MCF 10A (cell line): ENCODE measurements at regions of chr3 and their contacts with region 1.

Region 1: GRCh38 chr3:66038726-66039589 is at the start of gene MAGI1:
- DNase-seq: peak; percentile 91
- H3K4me3 Mint-ChIP-seq: peak within 1 kb of the TSS; percentile 91
- H3K27ac Mint-ChIP-seq: peak within 1 kb of the TSS; percentile 89
- H3K4me1 Mint-ChIP-seq: peaks cover 23% of the 10 kb centered on the region
- H3K27me3 Mint-ChIP-seq: peaks cover 10% of the 10 kb centered on the region
- CTCF ChIP-seq: no peak
- total RNA-seq, gene MAGI1: 6.2 and 6.3 TPM in 2 replicates

Region 2: DNA sequence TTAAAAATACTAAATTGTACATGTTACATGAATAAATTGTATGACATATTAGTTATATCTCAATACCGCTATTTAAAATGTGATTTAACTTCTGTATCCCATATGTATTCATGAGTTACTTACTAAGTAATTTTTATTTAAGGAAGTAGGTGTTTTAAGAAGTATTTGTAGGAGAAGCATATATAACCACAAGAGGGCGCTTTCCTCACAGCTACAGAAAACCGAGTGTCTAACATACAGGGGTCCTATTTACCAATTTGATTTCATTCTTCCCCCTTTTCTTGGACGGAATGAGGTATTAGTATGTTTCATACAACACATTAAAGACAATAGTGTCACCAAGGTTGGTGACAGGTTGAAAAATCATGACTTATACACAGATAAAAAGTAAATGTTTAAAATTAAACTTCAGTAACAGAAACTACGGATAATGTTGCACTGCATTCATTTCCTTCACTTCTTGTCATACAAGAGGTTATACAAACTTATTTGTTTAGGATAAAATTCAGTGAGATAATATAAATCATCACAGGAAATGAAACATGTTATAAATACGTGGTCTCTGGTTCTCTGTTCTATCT is 253.8 kb before region 1 on chr3:
- CTCF ChIA-PET with region 1: interaction called, 4 read pairs
- POLR2A ChIA-PET with region 1: no interaction called
- intact Hi-C with region 1: loop called (anchors 2 kb)
- DNase-seq: peak; percentile 48
- H3K4me3 Mint-ChIP-seq: no peak overlapping the region
- H3K27ac Mint-ChIP-seq: no peak overlapping the region
- H3K4me1 Mint-ChIP-seq: no peaks in the 10 kb centered on the region
- H3K27me3 Mint-ChIP-seq: no peaks in the 10 kb centered on the region
- CTCF ChIP-seq: peak; percentile 61

Region 3: GRCh38 chr3:65914740-65915367 is 124.1 kb before region 1 on chr3:
- CTCF ChIA-PET with region 1: no interaction called
- POLR2A ChIA-PET with region 1: no interaction called
- intact Hi-C with region 1: loop called (anchors 5 kb)
- DNase-seq: peak; percentile 18
- H3K4me3 Mint-ChIP-seq: no peak overlapping the region
- H3K27ac Mint-ChIP-seq: no peak overlapping the region
- H3K4me1 Mint-ChIP-seq: no peaks in the 10 kb centered on the region
- H3K27me3 Mint-ChIP-seq: no peaks in the 10 kb centered on the region
- CTCF ChIP-seq: peak; percentile 31

Region 4: GRCh38 chr3:65963787-65964677 is 74.9 kb before region 1 on chr3:
- CTCF ChIA-PET with region 1: interaction called, 3 read pairs
- POLR2A ChIA-PET with region 1: interaction called, 4 read pairs
- intact Hi-C with region 1: loop called (anchors 5 kb)
- DNase-seq: peak; percentile 88
- H3K4me3 Mint-ChIP-seq: no peak overlapping the region
- H3K27ac Mint-ChIP-seq: peak overlapping the region; percentile 37
- H3K4me1 Mint-ChIP-seq: peaks cover 23% of the 10 kb centered on the region
- H3K27me3 Mint-ChIP-seq: no peaks in the 10 kb centered on the region
- CTCF ChIP-seq: no peak

Region 5: DNA sequence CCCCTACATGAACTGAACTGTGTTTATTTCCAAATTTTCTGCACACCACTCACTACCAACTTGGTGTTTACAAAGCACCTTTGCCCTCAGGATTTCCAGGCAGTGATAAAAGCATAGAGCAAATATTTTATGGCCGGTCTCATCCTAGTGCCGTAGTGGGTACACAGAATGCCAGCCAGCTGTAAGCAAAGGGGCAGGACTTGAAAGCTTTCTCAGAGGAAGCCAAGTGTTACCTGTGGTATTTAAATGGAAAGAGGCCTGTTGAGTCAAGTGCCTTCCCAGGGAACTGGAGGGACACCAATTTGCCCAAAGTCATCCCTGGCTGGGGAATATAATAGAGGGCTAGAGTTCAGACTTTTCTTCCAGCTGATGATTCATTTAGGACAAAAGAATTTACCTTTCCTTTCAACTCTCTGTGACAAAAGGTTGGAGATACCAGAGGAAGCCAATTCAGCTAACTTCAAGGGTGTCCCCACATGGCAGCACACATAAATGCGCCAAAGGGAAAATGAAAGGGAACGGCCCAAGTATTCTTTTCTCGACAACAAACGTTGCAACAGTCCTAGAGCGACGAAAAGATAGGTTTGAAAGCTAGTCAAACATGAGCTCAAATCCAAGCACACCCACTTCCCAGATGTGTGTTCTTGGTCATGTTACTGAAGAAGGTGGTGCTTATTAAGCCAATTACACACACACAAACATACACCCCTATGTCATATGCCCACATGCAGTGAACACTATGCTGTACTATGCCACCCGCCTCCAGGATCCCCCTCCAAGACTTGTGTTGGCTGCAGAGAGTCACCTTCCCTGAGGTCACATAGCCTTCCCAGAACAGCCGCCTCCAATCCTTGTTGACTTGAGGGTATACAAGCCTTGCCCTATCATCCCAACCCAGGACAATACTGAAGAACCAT is 28.0 kb before region 1 on chr3:
- CTCF ChIA-PET with region 1: interaction called, 13 read pairs
- POLR2A ChIA-PET with region 1: interaction called, 14 read pairs
- intact Hi-C with region 1: no loop called
- DNase-seq: peak; percentile 30
- H3K4me3 Mint-ChIP-seq: peak overlapping the region; percentile 6
- H3K27ac Mint-ChIP-seq: no peak overlapping the region
- H3K4me1 Mint-ChIP-seq: peaks cover 9% of the 10 kb centered on the region
- H3K27me3 Mint-ChIP-seq: no peaks in the 10 kb centered on the region
- CTCF ChIP-seq: no peak

Region 6: GRCh38 chr3:66055289-66055688 is 16.3 kb after region 1 on chr3:
- CTCF ChIA-PET with region 1: no interaction called
- POLR2A ChIA-PET with region 1: no interaction called
- intact Hi-C with region 1: no loop called
- DNase-seq: no peak
- H3K4me3 Mint-ChIP-seq: no peak overlapping the region
- H3K27ac Mint-ChIP-seq: no peak overlapping the region
- H3K4me1 Mint-ChIP-seq: no peaks in the 10 kb centered on the region
- H3K27me3 Mint-ChIP-seq: no peaks in the 10 kb centered on the region
- CTCF ChIP-seq: no peak

Region 7: DNA sequence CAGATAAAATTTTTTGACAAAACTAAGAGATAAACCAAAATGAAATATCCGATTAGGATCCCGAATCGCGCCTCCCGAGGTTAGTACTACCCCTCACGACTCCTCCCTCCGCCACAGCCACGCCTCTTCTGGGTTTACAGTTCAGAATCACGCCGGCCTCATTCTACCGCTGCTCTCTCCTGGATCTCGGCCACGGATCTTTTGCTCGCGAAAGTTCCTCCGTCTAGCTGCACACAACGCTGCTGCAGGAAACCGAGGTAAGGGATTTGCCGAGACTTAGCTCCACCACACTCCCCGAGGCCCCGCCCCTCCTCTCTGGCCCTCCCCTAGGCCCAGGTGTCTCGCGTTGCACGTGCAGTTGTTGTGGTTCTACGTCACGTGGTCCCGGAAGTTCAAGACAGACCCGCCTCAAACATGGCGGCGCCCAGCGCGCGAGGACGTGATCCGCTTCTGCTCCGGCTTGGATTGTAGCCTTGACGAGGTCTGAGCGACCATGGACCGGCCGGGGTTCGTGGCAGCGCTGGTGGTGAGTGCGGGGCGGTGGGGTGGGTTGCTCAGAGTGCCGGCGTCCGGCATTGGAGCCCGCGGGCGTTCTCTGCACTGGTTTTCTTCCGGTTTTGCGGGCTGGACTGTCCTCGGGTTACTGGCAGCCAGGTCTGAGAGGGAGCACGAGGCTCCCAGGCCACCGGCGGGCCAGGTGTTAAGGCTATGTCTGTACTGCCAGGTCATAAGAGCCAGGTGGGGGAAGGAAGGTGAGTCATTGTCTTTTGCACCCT is 181.8 kb after region 1 on chr3 and contains the start of gene SLC25A26:
- CTCF ChIA-PET with region 1: interaction called, 3 read pairs
- POLR2A ChIA-PET with region 1: interaction called, 10 read pairs
- intact Hi-C with region 1: no loop called
- DNase-seq: peak; percentile 97
- H3K4me3 Mint-ChIP-seq: peak within 1 kb of the TSS; percentile 84
- H3K27ac Mint-ChIP-seq: peak within 1 kb of the TSS; percentile 98
- H3K4me1 Mint-ChIP-seq: peaks cover 15% of the 10 kb centered on the region
- H3K27me3 Mint-ChIP-seq: no peaks in the 10 kb centered on the region
- CTCF ChIP-seq: no peak
- total RNA-seq, gene SLC25A26: 23.3 and 24.8 TPM in 2 replicates